CD14-positive monocyte (primary cell): ENCODE measurements at regions of chr2 and their contacts with region 1.

Region 1: GRCh38 chr2:219597552-219598307 is at the start of gene STK11IP:
- DNase-seq: peak; percentile 96 to 97 (median 97)
- H3K4me3 ChIP-seq: peak within 1 kb of the TSS; percentile 65 to 81 (median 80)
- H3K4me3 Mint-ChIP-seq: peak within 1 kb of the TSS; percentile 95 to 96
- H3K27ac ChIP-seq: peak within 1 kb of the TSS; percentile 69 to 91
- H3K27ac Mint-ChIP-seq: peak within 1 kb of the TSS; percentile 94 to 99 (median 97)
- H3K4me1 ChIP-seq: peaks cover 11 to 16% of the 10 kb centered on the region in 2 donors
- H3K4me1 Mint-ChIP-seq: peaks cover 22% of the 10 kb centered on the region
- H3K27me3 ChIP-seq: no peaks in the 10 kb centered on the region
- H3K27me3 Mint-ChIP-seq: peaks cover 3 to 7% (median 4%) of the 10 kb centered on the region in 3 donors
- CTCF ChIP-seq: no peak
- polyA plus RNA-seq, gene STK11IP: 13.0 to 79.1 (median 15.7) TPM

Region 2: DNA sequence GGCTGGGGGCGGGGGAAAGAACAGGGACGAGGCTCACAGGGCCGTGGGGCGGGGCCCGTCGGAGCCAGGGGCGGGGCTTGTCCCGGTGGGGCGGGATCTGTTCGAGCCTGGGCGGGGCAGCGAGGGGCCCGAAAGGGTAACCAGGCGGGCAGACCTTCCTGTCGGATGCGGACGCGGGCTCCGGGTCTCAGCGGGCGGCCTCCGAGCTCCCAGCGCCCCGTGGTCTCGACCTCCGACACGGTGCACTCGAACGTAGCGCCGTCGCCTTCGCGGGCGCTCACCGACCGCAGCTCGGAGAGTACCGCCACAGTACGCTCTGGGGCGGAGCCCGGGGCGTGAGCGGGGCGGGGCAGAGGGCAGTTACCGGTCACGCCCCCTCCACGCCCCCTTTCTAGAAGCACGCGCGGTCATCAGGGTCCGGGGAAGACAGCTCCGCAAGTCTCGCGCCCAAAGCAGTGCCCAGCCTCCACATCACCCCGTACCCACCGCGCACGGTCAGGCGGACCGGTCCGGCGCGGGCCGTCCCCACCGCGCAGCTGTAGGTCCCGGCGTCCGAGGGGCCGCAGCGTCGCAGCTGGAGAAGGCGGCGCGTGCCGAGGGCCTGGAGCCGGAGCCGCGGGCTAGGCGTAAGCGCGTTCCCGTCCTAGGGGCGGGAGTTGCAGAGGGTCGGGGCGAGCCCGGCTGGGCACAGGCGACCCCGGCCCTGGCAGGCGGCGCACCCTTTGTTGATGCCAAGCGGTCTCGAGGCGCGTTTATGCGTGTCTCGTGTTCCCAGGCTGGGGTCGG is 45.2 kb before region 1 on chr2:
- intact Hi-C with region 1: loop called (anchors 5 kb)
- DNase-seq: peak; percentile 69 to 75 (median 73)
- H3K4me3 ChIP-seq: peak overlapping the region; percentile 30 to 71 (median 30)
- H3K4me3 Mint-ChIP-seq: peak overlapping the region; percentile 67 to 81
- H3K27ac ChIP-seq: no peak overlapping the region
- H3K27ac Mint-ChIP-seq: peak overlapping the region in 1 of 7 donors; percentile 21
- H3K4me1 ChIP-seq: peaks cover 12 to 18% of the 10 kb centered on the region in 2 donors
- H3K4me1 Mint-ChIP-seq: peaks cover 8% of the 10 kb centered on the region
- H3K27me3 ChIP-seq: peaks cover 17 to 44% of the 10 kb centered on the region in 2 donors
- H3K27me3 Mint-ChIP-seq: peaks cover 35 to 57% (median 46%) of the 10 kb centered on the region in 3 donors
- CTCF ChIP-seq: no peak

Region 3: DNA sequence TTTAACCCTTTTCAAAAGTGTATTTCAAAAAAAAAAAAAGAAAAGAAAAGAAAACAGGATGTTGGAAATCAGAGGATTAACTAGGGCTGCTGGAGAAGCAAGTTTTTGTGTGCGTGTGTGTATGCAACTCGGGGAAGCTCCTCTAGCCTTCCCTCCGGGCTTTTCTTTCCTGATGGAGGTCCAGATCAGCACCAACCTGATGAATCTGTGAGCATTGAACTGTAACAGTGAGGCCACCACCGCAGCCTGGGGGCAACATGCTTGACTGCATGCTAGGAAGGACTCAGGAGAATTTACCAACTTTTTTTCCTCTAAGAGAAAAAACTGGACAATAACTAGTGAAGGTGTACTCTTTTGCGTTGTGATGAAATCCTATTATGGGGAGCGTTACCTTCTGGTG is 28.7 kb before region 1 on chr2:
- intact Hi-C with region 1: no loop called
- DNase-seq: no peak
- H3K4me3 ChIP-seq: no peak overlapping the region
- H3K4me3 Mint-ChIP-seq: peak overlapping the region in 1 of 2 donors; percentile 81
- H3K27ac ChIP-seq: no peak overlapping the region
- H3K27ac Mint-ChIP-seq: no peak overlapping the region
- H3K4me1 ChIP-seq: peaks cover 0 to 15% of the 10 kb centered on the region in 2 donors
- H3K4me1 Mint-ChIP-seq: peaks cover 4% of the 10 kb centered on the region
- H3K27me3 ChIP-seq: peaks cover 23 to 43% of the 10 kb centered on the region in 2 donors
- H3K27me3 Mint-ChIP-seq: peaks cover 38 to 53% (median 46%) of the 10 kb centered on the region in 3 donors
- CTCF ChIP-seq: no peak